GM12878 (cell line): ENCODE measurements at regions of chr7 and their contacts with region 1.

Region 1: GRCh38 chr7:90244909-90245851 is at the start of gene CFAP69:
- DNase-seq: peak; percentile 46
- ATAC-seq: peak; percentile 69
- H3K4me3 ChIP-seq: peak within 1 kb of the TSS; percentile 66
- H3K27ac ChIP-seq: no peak within 1 kb of the TSS
- H3K4me1 ChIP-seq: peaks cover 5% of the 10 kb centered on the region; the same call in 1 of the 2 replicates
- H3K27me3 ChIP-seq: peaks cover 0 to 6% of the 10 kb centered on the region in 2 experiments; a peak in 1 of 4 replicates
- CTCF ChIP-seq: peak in 2 of 3 experiments; percentile 7 to 30; a peak in 1 of 6 replicates
- EP300 ChIP-seq: peak in 1 of 2 experiments; percentile 62; a peak in 2 of 4 replicates
- POLR2A ChIP-seq: peak; percentile 31; the same call in 1 of the 2 replicates
- RAD21 ChIP-seq: no peak
- polyA plus RNA-seq, gene CFAP69: 0.11 TPM in 1 of 2 experiments, not detected in the other

Region 2: GRCh38 chr7:89798599-89798996 is 446.6 kb before region 1 on chr7:
- CTCF ChIA-PET with region 1: no interaction called
- POLR2A ChIA-PET with region 1: no interaction called
- RAD21 ChIA-PET with region 1: no interaction called
- SMC1A ChIA-PET with region 1: no interaction called
- in situ Hi-C with region 1: no loop called
- intact Hi-C with region 1: no loop called
- DNase-seq: no peak
- ATAC-seq: no peak
- H3K4me3 ChIP-seq: no peak overlapping the region
- H3K27ac ChIP-seq: no peak overlapping the region
- H3K4me1 ChIP-seq: no peaks in the 10 kb centered on the region
- H3K27me3 ChIP-seq: no peaks in the 10 kb centered on the region
- CTCF ChIP-seq: no peak
- EP300 ChIP-seq: no peak
- POLR2A ChIP-seq: no peak
- RAD21 ChIP-seq: no peak

Region 3: DNA sequence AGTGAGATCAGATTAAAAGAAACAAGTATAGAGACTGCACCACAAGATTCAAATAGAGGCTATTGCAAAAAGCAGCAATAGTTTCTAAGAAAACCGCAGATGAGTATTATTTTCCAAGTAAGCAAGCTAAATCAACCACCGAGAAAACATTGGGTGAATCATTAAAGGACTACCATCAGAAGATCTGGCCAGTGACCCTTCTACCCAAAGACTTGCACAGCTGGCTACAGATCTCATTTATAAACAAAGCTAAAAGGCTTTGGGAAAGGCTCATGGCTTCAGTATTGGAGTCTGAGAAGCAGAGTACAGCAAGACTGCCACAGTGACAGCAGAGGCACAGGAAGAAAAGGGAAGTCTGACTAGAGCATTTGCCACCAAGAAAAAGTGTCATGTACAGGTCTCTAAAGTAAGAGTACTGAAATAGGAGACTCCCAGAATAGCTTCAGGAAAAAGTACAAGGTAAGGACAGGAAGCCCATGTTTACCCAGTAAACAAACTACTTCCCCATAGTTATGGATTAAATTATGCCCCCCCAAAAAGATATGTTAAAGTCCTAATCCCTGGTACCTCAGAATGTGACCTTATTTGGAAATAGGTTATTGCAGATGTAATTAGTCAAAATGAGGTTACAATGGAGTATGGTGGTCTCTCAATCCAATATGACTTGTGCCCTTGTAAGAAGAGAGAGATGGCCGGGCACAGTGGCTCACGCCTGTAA is 71.9 kb before region 1 on chr7:
- CTCF ChIA-PET with region 1: interaction called, 9 read pairs
- POLR2A ChIA-PET with region 1: interaction called, 17 read pairs
- RAD21 ChIA-PET with region 1: interaction called, 10 read pairs
- SMC1A ChIA-PET with region 1: interaction called, 33 read pairs
- in situ Hi-C with region 1: loop called (anchors 5 kb)
- intact Hi-C with region 1: loop called (anchors 2 kb)
- DNase-seq: peak; percentile 64
- ATAC-seq: peak; percentile 93
- H3K4me3 ChIP-seq: no peak overlapping the region
- H3K27ac ChIP-seq: no peak overlapping the region
- H3K4me1 ChIP-seq: no peaks in the 10 kb centered on the region
- H3K27me3 ChIP-seq: no peaks in the 10 kb centered on the region
- CTCF ChIP-seq: no peak
- EP300 ChIP-seq: peak in 1 of 2 experiments; percentile 48; a peak in 1 of 4 replicates
- POLR2A ChIP-seq: no peak
- RAD21 ChIP-seq: no peak

Region 4: GRCh38 chr7:90188281-90188680 is 56.9 kb before region 1 on chr7:
- CTCF ChIA-PET with region 1: interaction called, 15 read pairs
- POLR2A ChIA-PET with region 1: interaction called, 3 read pairs
- RAD21 ChIA-PET with region 1: interaction called, 5 read pairs
- SMC1A ChIA-PET with region 1: interaction called, 17 read pairs
- in situ Hi-C with region 1: no loop called
- intact Hi-C with region 1: no loop called
- DNase-seq: no peak
- ATAC-seq: peak; percentile 95
- H3K4me3 ChIP-seq: no peak overlapping the region
- H3K27ac ChIP-seq: no peak overlapping the region
- H3K4me1 ChIP-seq: no peaks in the 10 kb centered on the region
- H3K27me3 ChIP-seq: no peaks in the 10 kb centered on the region
- CTCF ChIP-seq: no peak
- EP300 ChIP-seq: no peak
- POLR2A ChIP-seq: no peak
- RAD21 ChIP-seq: no peak

Region 5: GRCh38 chr7:90229682-90230081 is 15.5 kb before region 1 on chr7:
- CTCF ChIA-PET with region 1: interaction called, 3 read pairs
- POLR2A ChIA-PET with region 1: interaction called, 32 read pairs
- RAD21 ChIA-PET with region 1: interaction called, 38 read pairs
- SMC1A ChIA-PET with region 1: interaction called, 51 read pairs
- in situ Hi-C with region 1: no loop called
- intact Hi-C with region 1: no loop called
- DNase-seq: no peak
- ATAC-seq: no peak
- H3K4me3 ChIP-seq: no peak overlapping the region
- H3K27ac ChIP-seq: no peak overlapping the region
- H3K4me1 ChIP-seq: no peaks in the 10 kb centered on the region
- H3K27me3 ChIP-seq: no peaks in the 10 kb centered on the region
- CTCF ChIP-seq: no peak
- EP300 ChIP-seq: no peak
- POLR2A ChIP-seq: no peak
- RAD21 ChIP-seq: no peak

Region 6: DNA sequence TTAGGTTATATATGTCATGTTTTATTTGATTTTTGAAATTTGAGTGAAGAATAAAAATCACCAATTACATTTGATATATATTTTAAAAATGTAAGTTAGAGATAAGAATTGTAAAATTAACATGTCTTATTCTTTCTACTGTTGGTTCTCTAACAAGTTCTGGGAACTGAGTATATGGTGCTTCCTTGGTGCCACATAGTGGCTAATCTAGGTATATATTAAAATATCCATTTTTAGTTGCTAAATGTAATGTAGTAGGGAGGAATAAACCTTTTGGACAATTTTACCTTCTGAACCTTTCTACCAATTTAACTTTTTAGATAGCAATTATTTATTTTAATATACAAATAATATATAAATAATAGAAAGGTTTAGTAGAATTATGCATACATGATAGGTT is 17.3 kb after region 1 on chr7:
- CTCF ChIA-PET with region 1: interaction called, 20 read pairs
- POLR2A ChIA-PET with region 1: interaction called, 9 read pairs
- RAD21 ChIA-PET with region 1: interaction called, 18 read pairs
- SMC1A ChIA-PET with region 1: interaction called, 22 read pairs
- in situ Hi-C with region 1: no loop called
- intact Hi-C with region 1: no loop called
- DNase-seq: no peak
- ATAC-seq: peak; percentile 92
- H3K4me3 ChIP-seq: no peak overlapping the region
- H3K27ac ChIP-seq: no peak overlapping the region
- H3K4me1 ChIP-seq: no peaks in the 10 kb centered on the region
- H3K27me3 ChIP-seq: 0 out of 4 replicates have a peak, but pooled peaks cover 0 to under 1% of the 10 kb centered on the region in 2 experiments
- CTCF ChIP-seq: peak; percentile 28 to 68 (median 32); a peak in 4 of 6 replicates
- EP300 ChIP-seq: no peak
- POLR2A ChIP-seq: no peak
- RAD21 ChIP-seq: peak; percentile 82